GM13976 (cell line): ENCODE measurements at regions of chr2 and their contacts with region 1.

Region 1: DNA sequence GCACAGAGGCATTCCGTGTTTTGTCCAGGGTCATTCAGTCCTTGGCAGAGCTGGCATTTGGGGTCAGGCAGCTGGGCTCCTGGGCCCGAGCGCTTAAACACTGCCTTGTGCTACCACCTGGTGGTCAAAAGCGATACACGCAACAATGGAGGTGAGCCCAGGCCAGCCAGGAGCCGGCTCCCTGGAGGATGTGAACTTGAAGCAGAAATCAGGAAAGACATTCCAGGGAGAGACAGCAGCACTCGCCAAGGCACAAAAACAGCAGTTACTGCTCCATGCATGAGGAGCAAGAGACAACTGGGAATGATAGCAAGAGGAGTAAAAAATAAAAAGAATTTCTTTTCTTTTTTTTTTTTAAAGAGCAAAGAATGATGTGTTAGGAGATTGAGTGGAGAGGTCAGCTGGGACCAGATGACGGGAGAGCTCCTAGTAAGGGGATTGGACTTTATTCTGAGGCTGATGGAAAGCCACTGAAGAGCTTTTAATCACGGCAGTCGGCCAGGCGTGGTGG is 20.7 kb downstream of the SCYGR8 start:
- DNase-seq: peak; percentile 80
- CTCF ChIP-seq: peak; percentile 69

Region 2: GRCh38 chr2:227095346-227095745 is 671.1 kb before region 1 on chr2:
- in situ Hi-C with region 1: no loop called
- DNase-seq: no peak
- CTCF ChIP-seq: no peak

Region 3: DNA sequence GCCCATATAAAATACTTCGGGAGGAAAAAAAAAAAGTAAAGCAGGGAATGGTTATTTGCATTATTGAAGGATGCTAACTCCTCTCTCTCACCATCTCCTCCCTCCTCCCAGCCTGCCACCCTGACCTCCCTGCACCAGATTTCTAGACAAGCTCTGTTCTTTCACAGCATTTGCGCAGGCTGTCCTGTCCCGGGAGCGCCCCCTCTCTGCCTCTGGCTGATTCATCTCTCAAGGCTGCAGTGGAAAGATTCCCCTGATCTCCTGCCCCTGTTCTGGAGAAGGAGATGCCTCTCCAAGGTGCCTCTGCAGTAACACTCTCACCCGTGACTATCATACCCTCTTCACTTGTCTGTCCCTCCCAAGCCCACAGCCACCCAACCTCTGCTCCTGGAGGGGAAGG is 640.9 kb before region 1 on chr2:
- in situ Hi-C with region 1: loop called (anchors 25 kb)
- DNase-seq: no peak
- CTCF ChIP-seq: no peak

Region 4: DNA sequence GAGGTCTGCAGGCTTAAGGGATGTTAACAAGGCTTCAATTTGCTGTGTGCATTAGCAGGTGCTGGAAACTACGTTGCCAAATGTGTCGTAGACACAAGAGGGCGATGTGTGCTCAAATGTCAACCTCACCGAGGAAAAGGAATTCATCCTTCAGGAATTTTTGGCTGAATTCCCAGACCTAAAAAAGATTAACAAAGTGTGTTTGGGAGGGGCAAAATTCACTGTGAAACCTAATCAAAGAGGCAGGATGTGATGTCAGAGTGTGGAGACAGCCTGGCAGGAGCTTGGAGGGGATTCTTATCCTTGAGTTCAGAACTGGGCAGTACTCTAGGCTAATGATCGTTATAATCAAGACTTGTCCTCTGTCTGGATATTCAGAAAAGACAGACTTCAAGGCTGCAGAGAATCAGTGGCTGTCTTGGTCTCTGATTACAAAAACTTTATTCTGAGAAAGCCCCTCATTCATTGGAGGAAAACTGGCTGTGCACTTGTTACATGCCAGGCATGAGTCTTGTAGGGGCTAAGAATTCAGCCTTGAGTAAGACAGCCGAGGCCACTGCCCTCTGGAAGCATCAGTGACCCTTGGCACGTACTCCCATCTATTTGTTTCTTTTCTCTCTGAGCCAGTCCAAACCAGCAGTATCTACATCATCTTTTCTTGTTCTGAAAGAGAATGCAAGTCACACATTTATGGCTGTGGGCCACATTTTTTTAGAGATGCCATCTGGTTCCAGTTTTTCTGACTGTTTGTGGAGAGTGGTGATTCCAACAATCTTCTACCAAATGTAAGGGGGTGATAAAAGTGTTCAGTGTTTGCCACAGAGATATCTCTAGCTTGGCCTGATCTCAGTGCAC is 360.0 kb before region 1 on chr2:
- in situ Hi-C with region 1: loop called (anchors 10 kb)
- DNase-seq: peak; percentile 59
- CTCF ChIP-seq: peak; percentile 72